ENCODE measurements at regions of chr2 and their contacts with region 1.

Region 1: GRCh38 chr2:181104512-181105115 is 124.2 kb downstream of the UBE2E3 start:
- DNase-seq: no peak
- ATAC-seq: no peak

Region 2: DNA sequence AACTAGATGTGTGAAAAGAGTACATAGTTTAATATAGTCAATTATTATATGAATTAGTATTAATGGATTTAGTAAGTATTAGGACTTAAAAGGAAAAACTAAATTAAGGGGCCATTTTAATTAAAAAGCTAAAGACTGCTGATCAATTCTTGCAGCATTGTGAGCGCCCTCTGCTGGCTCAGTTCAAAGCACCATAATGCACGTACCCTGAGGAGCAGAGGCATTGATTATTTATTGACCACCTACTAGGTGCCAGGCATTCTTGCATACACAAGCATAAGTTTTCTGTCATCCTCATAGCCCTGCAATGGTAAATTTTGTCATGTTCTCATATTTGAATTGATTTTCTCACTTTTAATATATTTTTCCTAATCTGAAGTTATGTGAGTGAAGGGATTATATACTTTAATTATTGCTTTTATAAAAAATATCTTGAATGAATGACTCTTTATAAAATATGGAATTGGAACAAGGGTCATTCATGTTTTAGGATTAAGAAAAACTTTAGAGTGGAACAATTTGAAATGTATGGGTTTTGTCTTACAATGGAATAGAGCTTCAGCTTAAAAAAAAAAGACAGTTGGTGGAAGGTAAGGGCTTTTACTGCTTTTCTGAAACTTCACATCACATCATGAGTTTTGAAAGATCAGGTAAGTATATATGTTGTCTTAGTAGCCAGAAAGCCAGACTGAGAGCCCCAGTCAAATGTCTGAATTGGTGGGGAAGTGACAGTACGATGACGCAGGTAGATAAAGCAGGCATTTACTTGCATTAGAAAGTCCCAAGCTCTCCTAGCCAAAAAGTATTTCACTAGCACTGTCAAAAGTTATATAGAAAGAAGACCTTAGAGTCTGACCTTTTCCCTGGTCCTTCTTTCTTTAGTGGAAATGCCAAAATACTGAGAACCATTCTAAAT is 362.3 kb after region 1 on chr2:
- intact Hi-C with region 1: loop called (anchors 5 kb)
- DNase-seq: peak; percentile 79
- ATAC-seq: peak; percentile 53

Region 3: DNA sequence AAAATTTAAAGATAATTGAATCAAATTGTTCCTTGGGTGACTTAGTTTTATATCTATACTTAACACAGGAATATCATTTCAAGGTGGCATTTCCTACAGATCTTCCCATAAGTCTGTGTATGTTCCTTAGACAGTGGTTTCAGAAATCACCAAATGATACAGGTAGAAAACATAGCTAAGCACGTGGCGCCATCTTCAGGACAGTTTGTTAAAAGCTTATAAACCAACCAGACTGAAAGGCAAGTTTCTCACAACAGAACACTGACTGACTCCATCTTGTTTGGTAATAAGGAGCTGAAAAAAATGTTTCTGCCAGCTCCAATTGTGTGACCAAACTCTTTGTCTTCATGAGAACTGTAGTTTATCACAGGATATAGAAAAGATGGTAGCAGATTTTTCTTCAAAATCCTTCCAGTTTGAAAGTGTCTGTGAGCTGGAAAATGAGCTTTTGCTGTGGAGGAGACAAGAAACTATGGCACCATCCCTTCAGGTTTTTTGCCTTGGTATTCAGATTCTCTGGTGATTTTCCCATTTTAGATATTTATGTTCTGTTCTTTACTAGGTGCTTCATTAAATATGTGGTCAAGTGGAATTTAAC is 610.5 kb after region 1 on chr2:
- intact Hi-C with region 1: loop called (anchors 5 kb)
- DNase-seq: peak; percentile 46
- ATAC-seq: peak; percentile 77